Caco-2 (cell line): ENCODE measurements at regions of chr16 and their contacts with region 1.

Region 1: DNA sequence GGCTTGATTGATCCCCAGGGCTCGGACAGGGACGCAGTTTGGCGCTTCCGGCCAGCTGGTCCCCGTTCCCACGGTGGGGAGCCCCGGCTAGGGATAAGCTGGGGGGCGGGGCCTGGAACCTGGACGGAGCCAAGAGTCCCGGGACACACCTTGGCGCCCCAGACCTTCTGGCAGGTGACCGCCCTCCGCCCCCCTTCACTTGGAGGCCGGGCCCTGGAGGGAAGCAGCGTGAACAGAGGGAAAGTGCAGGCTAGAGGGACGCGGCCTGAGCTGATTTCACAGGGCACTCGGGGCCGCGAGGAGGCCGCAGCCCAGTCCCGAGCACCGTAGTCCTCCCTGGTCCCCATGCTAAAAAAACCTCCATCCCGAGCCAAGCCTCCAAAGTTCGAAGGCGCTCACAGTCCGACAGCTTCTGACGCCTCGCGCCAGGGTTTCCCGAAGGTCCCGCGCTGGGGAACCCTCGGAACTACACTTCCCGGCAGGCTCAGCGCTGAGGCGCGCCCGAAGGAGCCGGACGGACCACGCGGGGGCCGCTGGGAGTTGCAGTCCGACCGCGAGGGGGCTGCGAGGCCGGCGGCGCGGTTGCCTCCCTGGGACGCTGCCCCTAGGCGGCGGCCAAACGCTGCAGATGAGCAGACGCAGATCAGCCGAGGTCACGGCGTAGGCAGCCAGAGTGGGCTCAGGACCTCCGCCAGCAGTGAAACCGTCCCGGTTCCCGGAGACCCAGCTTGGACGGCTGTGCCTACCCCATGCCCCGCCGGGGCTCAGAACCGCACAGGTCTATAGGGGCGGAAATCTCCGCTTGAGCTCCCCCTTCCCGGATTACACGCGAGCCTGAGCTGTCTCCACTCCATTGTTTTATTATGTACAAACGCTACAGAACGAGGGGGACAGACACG is at the start of gene TBX6:
- DNase-seq: peak; percentile 88 to 95
- H3K4me3 ChIP-seq: peak within 1 kb of the TSS; percentile 53
- H3K4me3 Mint-ChIP-seq: peak within 1 kb of the TSS; percentile 82
- H3K27ac Mint-ChIP-seq: peak within 1 kb of the TSS; percentile 83
- H3K4me1 ChIP-seq: peaks cover 26% of the 10 kb centered on the region
- H3K4me1 Mint-ChIP-seq: peaks cover 18% of the 10 kb centered on the region
- H3K27me3 ChIP-seq: no peaks in the 10 kb centered on the region
- H3K27me3 Mint-ChIP-seq: no peaks in the 10 kb centered on the region
- CTCF ChIP-seq: peak; percentile 75 to 79
- total RNA-seq, gene TBX6: 1.1 and 1.6 TPM in 2 replicates

Region 2: DNA sequence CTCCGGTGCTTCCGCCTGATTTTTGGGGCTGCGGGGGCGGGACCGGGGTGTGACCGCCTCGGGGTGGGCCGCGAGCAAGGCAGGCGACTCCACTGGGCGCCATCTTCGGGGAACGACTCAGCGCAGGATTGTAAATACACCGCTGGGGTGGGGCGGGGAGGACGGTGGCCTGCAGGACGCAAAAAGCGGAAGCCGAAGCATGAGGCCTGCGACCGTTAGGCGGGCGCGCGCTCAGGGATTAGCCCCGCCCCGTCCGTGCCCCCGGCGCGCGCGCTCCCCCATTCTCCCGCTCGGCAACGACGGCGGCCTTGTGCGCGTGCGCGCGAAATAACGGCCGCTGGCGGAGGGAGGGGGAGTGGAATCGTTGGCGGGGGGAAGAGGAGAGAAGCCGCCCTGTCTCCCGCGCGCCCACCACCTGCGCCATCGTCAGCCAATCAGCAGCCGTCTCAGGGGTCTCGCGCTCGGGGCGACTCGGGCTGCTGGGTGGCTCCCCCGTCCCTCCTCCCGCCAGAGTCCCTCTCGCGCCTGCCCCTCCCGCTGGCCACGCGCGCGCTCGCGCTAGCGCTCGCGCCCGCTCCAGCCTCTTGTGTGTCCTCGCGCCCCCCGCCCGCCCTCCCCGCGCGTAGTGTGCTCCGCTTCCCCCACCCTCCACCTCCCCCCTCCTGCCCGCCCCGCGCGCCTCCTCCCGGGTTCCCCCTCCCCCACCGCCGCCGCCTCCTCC is 286.2 kb before region 1 on chr16:
- CTCF ChIA-PET with region 1: no interaction called
- POLR2A ChIA-PET with region 1: no interaction called
- intact Hi-C with region 1: no loop called
- DNase-seq: peak; percentile 96 to 97
- H3K4me3 ChIP-seq: peak overlapping the region; percentile 59
- H3K4me3 Mint-ChIP-seq: peak overlapping the region; percentile 79
- H3K27ac Mint-ChIP-seq: peak overlapping the region; percentile 92
- H3K4me1 ChIP-seq: peaks cover 20% of the 10 kb centered on the region; the same call in 1 of the 2 replicates
- H3K4me1 Mint-ChIP-seq: peaks cover 26% of the 10 kb centered on the region
- H3K27me3 ChIP-seq: no peaks in the 10 kb centered on the region
- H3K27me3 Mint-ChIP-seq: no peaks in the 10 kb centered on the region
- CTCF ChIP-seq: no peak

Region 3: DNA sequence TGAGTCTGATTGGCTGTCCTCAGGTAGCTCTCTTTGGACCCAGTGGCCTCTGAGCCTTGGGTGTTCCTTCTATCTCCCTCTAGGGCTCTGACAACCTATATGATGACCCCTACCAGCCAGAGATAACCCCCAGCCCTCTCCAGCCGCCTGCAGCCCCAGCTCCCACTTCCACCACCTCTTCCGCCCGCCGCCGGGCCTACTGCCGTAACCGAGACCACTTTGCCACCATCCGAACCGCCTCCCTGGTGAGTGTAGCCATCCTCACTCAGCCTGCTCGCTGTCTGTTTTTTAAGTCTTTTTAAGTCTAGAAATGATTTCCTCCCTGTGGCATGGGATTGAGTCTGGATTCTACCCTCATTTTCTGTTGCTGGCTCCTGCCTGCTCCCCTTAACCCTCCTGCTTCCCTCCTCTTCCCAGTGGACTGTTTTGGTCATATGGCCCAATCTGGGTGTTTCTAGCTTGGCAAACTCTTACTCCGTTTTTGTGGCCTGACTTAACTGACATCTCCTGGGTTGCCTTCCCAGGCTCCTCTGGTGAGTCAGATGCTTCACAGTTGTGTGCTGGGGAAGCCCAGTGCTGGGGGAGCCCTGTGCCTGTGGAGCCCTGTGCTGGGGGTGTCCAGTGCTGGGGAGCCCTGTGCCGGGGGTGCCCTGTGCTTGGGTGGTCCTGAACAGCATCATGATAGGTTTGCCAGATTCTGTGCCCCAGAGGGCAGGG is 108.1 kb before region 1 on chr16:
- CTCF ChIA-PET with region 1: no interaction called
- POLR2A ChIA-PET with region 1: no interaction called
- intact Hi-C with region 1: no loop called
- DNase-seq: no peak
- H3K4me3 ChIP-seq: no peak overlapping the region
- H3K4me3 Mint-ChIP-seq: no peak overlapping the region
- H3K27ac Mint-ChIP-seq: no peak overlapping the region
- H3K4me1 ChIP-seq: no peaks in the 10 kb centered on the region
- H3K4me1 Mint-ChIP-seq: no peaks in the 10 kb centered on the region
- H3K27me3 ChIP-seq: no peaks in the 10 kb centered on the region
- H3K27me3 Mint-ChIP-seq: no peaks in the 10 kb centered on the region
- CTCF ChIP-seq: no peak

Region 4: GRCh38 chr16:30065143-30065850 is 26.4 kb before region 1 on chr16 and contains the start of gene ALDOA:
- CTCF ChIA-PET with region 1: interaction called, 9 read pairs
- POLR2A ChIA-PET with region 1: interaction called, 3 read pairs
- intact Hi-C with region 1: loop called (anchors 2 kb)
- DNase-seq: peak; percentile 95 to 96
- H3K4me3 ChIP-seq: peak within 1 kb of the TSS; percentile 98
- H3K4me3 Mint-ChIP-seq: peak within 1 kb of the TSS; percentile 95
- H3K27ac Mint-ChIP-seq: peak within 1 kb of the TSS; percentile 97
- H3K4me1 ChIP-seq: peaks cover 8% of the 10 kb centered on the region; the same call in 1 of the 2 replicates
- H3K4me1 Mint-ChIP-seq: peaks cover 19% of the 10 kb centered on the region
- H3K27me3 ChIP-seq: no peaks in the 10 kb centered on the region
- H3K27me3 Mint-ChIP-seq: no peaks in the 10 kb centered on the region
- CTCF ChIP-seq: no peak
- total RNA-seq, gene ALDOA: 675 and 802 TPM in 2 replicates

Region 5: DNA sequence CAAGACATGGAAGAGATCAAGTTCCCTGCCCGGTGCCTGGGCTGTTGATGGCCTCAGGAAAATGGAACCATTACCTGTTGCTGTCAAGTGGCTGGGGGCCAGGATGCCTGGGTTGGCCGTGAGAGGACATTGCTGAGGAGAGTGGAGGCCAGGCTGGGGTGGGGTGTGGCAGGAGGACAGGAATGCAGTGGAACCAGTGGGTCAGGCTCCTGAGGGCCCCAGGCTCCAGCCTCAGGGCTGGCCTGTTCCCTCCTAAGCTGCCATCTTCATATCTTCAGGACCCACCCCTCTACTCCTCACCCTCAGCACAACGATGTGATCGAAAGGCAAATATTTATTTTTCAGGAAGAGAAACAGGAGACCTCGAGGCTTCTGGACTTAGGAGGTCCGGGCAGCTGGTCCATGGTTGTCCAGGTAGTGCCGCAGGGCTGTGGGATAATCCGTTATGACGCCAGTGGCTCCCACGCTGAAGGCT is 12.8 kb after region 1 on chr16:
- CTCF ChIA-PET with region 1: interaction called, 13 read pairs
- POLR2A ChIA-PET with region 1: no interaction called
- intact Hi-C with region 1: no loop called
- DNase-seq: peak; percentile 88 to 89
- H3K4me3 ChIP-seq: no peak overlapping the region
- H3K4me3 Mint-ChIP-seq: peak overlapping the region; percentile 66
- H3K27ac Mint-ChIP-seq: peak overlapping the region; percentile 97
- H3K4me1 ChIP-seq: peaks cover 22% of the 10 kb centered on the region
- H3K4me1 Mint-ChIP-seq: peaks cover 13% of the 10 kb centered on the region
- H3K27me3 ChIP-seq: no peaks in the 10 kb centered on the region
- H3K27me3 Mint-ChIP-seq: no peaks in the 10 kb centered on the region
- CTCF ChIP-seq: no peak

Region 6: GRCh38 chr16:30112197-30113030 is 20.7 kb after region 1 on chr16:
- CTCF ChIA-PET with region 1: interaction called, 22 read pairs
- POLR2A ChIA-PET with region 1: no interaction called
- intact Hi-C with region 1: no loop called
- DNase-seq: peak; percentile 66 to 78
- H3K4me3 ChIP-seq: no peak overlapping the region
- H3K4me3 Mint-ChIP-seq: no peak overlapping the region
- H3K27ac Mint-ChIP-seq: peak overlapping the region; percentile 2
- H3K4me1 ChIP-seq: peaks cover 18% of the 10 kb centered on the region; the same call in 1 of the 2 replicates
- H3K4me1 Mint-ChIP-seq: peaks cover 9% of the 10 kb centered on the region
- H3K27me3 ChIP-seq: no peaks in the 10 kb centered on the region
- H3K27me3 Mint-ChIP-seq: no peaks in the 10 kb centered on the region
- CTCF ChIP-seq: peak; percentile 61 to 75

Region 7: GRCh38 chr16:30355144-30355894 is 263.6 kb after region 1 on chr16 and contains the start of gene CD2BP2:
- CTCF ChIA-PET with region 1: no interaction called
- POLR2A ChIA-PET with region 1: no interaction called
- intact Hi-C with region 1: loop called (anchors 1 kb)
- DNase-seq: peak; percentile 93 to 97
- H3K4me3 ChIP-seq: peak within 1 kb of the TSS; percentile 97
- H3K4me3 Mint-ChIP-seq: peak within 1 kb of the TSS; percentile 94
- H3K27ac Mint-ChIP-seq: peak within 1 kb of the TSS; percentile 99
- H3K4me1 ChIP-seq: peaks cover 5% of the 10 kb centered on the region; the same call in 1 of the 2 replicates
- H3K4me1 Mint-ChIP-seq: peaks cover 18% of the 10 kb centered on the region
- H3K27me3 ChIP-seq: no peaks in the 10 kb centered on the region
- H3K27me3 Mint-ChIP-seq: no peaks in the 10 kb centered on the region
- CTCF ChIP-seq: no peak
- total RNA-seq, gene CD2BP2: 50.1 and 51.8 TPM in 2 replicates